ENCODE measurements at regions of chr10 and their contacts with region 1.

Region 1: DNA sequence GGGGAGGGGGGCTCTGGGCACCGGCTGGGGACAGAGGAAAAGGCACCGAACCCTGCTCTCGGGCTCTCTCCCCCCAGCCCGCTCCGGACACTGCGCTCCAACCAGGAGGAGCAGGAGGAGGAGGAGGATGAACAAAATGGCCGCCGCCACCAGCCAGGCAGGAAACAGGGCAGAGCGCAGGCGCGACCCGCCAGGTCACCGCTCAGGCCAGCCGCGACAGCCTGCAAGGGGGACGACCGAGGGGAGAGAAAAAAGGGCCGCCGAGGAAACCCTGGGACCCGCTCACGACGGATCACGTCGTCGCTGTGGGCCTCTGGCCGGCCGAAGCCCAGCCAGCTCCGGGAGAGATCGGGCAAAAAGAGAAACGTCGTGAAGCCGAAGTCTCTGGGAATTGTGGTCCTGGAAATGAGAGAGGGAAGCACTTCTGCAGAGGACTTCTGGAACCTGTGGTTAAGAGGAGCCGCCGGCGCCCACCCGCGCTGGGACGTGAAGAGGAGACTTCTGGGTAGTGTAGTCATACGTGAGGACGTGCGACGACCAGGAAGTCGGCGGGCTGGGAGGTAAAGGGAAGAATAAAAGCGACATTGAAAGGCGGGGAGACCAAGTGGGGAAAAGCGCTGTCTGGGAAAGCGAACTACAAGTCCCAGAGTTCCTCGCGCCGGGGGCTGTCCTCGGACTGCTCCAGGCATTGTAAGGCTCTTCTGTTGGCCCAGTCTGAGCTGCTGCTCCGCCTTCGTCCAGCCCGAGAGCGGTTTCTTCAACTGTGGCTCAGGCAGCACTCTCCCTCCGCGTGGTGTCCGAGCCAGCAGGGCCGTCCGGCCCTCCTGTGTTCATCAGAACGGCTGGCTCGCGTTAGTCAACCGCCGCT is at the start of gene TIAL1:
- DNase-seq: peak; percentile 96 to 100 (median 99)

Region 2: GRCh38 chr10:119538632-119539513 is 57.9 kb before region 1 on chr10:
- intact Hi-C with region 1: no loop called
- DNase-seq: no peak

Region 3: GRCh38 chr10:119650692-119651513 is 54.1 kb after region 1 on chr10 and contains the start of gene BAG3:
- intact Hi-C with region 1: loop called (anchors 5 kb)
- DNase-seq: peak; percentile 76 to 96 (median 88)

Region 4: GRCh38 chr10:119725828-119726675 is 129.3 kb after region 1 on chr10 and contains the start of gene INPP5F:
- intact Hi-C with region 1: loop called (anchors 10 kb)
- DNase-seq: peak; percentile 93 to 100 (median 99)

Region 5: GRCh38 chr10:119769886-119770285 is 173.1 kb after region 1 on chr10:
- intact Hi-C with region 1: no loop called
- DNase-seq: no peak

Measured in head of caudate nucleus (tissue), 42 donors.